Endothelial cell of umbilical vein (primary cell): ENCODE measurements at regions of chr6 and their contacts with region 1.

Region 1: DNA sequence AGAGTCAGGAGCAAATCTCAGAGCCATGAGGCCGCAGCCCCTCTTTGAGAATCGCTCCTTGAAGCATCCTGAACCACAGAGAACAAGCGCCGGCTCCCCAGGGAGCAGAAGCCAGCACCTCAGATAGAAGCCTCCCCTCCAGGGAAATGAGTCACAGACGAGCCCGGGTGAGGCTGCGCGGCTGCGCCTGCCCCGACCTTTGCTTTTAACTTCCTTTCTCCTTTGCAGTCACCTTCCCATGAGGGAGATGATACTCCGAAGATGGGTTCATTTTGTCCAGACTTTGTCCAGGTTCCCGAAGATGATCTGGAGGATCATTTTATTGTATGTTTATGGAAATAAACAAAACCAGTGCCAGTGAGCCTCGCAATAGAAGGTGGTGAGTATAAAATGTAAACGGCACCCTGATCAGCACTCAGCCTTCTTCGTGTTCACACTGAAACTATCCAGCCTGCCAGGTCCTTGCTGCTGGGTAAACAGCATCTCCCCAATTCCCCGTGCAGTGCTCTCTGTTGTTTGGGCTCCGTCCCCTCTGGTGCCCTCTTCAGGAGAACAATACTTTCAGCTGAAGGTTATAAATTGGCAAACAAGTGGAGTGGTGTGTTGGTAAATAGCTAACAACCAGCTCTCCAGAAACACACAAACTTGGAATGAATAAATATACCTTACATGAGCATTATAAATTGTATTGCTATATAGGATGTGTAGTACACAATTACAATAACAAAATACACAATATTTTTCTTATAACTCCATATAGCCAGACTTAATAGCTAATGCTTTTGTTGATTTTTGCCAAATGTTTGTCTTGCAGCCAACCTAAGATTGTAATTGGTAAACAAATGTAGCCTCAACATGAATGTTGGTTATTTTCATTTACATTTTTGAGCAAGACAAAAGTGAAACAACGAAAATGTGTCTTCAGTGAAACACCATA is 41.4 kb upstream of the TMEM181 start:
- DNase-seq: peak; percentile 71
- H3K4me3 ChIP-seq: peak overlapping the region in 2 of 3 experiments; percentile 17 to 23
- H3K27ac ChIP-seq: no peak overlapping the region
- H3K4me1 ChIP-seq: peaks cover 15% of the 10 kb centered on the region
- H3K27me3 ChIP-seq: no peaks in the 10 kb centered on the region
- CTCF ChIP-seq: peak; percentile 51 to 54
- POLR2A ChIP-seq: no peak

Region 2: DNA sequence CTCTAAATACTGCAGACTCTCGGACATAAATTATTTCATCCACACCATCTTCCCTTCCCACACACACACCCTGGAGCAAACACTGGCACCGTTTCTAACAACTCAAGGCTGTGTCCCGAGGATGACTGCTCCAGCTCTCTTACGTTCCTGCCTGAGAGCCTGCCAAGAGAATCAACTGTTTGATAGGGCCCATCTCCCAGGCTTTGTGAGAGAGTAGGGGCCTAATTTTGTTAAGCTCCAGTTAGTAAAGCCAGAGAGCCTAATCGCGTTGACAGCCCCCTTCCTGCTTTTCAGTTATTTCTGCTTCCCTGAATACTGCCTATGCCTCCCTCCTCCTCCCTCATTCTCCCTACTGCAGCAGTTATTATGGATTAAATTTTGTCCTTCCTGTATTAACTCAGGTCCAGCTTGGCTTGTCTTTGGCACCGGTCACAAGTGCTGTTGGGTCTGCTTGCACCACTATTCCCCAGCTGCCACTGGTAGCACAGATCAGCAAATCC is 76.7 kb before region 1 on chr6:
- CTCF ChIA-PET with region 1: interaction called, 6 read pairs
- POLR2A ChIA-PET with region 1: no interaction called
- dilution Hi-C with region 1: no loop called
- intact Hi-C with region 1: loop called (anchors 2 kb)
- DNase-seq: no peak
- H3K4me3 ChIP-seq: no peak overlapping the region
- H3K27ac ChIP-seq: no peak overlapping the region
- H3K4me1 ChIP-seq: no peaks in the 10 kb centered on the region
- H3K27me3 ChIP-seq: no peaks in the 10 kb centered on the region
- CTCF ChIP-seq: no peak
- POLR2A ChIP-seq: no peak

Region 3: GRCh38 chr6:158500016-158500735 is 18.3 kb before region 1 on chr6:
- CTCF ChIA-PET with region 1: interaction called, 12 read pairs
- POLR2A ChIA-PET with region 1: no interaction called
- dilution Hi-C with region 1: no loop called
- intact Hi-C with region 1: no loop called
- DNase-seq: no peak
- H3K4me3 ChIP-seq: no peak overlapping the region
- H3K27ac ChIP-seq: no peak overlapping the region
- H3K4me1 ChIP-seq: no peaks in the 10 kb centered on the region
- H3K27me3 ChIP-seq: no peaks in the 10 kb centered on the region
- CTCF ChIP-seq: no peak
- POLR2A ChIP-seq: no peak

Region 4: DNA sequence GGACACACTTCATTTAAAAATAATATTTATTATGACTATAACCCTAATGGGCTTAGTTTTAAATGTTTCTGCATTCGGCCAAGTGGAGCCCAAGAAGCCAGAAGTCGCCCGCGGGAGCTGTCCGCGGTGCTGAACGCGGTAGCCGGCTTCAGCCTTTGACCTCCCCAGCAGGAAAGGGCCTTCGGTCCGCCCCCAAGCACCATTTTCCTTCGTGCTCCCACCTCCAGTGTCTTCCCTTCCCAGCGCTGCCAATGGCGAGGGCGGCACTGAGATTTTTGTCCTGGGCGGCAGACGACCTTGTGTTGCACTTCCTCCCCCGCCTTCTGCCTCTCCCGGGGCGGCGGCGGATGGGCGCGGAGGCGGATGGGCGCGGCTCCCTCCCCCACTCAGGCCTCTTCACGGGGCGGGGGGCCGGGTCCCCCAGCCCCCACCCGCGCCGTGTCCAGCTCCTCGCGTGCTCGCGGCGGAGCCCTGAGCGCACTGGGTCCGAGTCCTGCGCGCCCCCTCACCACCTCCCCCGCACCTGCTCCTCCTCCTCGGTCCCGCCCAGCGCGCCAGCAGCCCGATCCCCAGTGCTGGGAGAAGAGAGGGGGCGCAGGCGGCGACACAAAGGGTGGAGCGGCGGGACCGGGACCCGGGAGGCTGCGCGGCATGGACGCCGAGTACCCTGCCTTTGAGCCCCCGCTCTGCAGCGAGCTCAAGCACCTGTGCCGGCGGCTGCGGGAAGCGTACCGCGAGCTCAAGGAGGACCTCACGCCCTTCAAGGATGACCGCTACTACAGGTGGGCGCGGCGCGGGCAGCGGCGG is 17.8 kb after region 1 on chr6:
- CTCF ChIA-PET with region 1: interaction called, 4 read pairs
- POLR2A ChIA-PET with region 1: no interaction called
- dilution Hi-C with region 1: no loop called
- intact Hi-C with region 1: loop called (anchors 2 kb)
- DNase-seq: peak; percentile 64
- H3K4me3 ChIP-seq: peak overlapping the region; percentile 32 to 42 (median 39)
- H3K27ac ChIP-seq: no peak overlapping the region
- H3K4me1 ChIP-seq: peaks cover 7% of the 10 kb centered on the region
- H3K27me3 ChIP-seq: peaks cover 22 to 45% of the 10 kb centered on the region in 2 experiments
- CTCF ChIP-seq: no peak
- POLR2A ChIP-seq: no peak

Region 5: DNA sequence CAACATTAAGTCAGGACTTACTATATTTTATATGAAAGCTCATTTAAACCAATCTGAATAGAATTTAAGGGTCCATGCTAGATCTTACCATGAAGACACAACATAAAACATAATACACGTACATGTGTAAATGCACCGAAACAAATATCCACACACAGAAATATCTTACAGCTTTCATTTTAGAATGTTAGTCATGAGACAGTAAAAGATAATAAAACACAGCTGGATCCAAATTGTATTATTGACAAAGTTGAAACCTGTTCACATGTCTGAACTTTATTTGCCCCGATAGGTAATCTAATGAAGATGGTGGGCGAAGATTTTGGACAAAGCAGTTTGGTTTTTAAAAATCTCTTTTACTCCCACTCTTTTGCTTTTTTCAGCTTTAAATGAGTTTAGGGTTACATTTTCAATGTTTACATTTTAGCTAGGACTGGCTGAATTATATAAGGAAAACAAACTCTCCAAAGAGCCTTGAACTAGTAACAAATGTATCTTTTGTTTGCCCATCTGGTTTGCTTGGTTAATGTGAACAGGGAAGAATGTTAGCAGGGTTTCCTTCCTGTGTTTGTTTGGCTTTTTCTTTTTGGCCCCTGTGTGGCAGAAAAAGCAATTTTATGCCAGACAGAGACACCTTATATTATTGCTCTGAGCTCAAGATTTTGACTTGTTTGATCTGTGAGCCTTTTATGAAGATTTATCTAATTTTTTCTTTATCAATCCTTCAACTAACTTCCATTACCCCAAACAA is 36.3 kb after region 1 on chr6:
- CTCF ChIA-PET with region 1: interaction called, 13 read pairs
- POLR2A ChIA-PET with region 1: no interaction called
- dilution Hi-C with region 1: no loop called
- intact Hi-C with region 1: loop called (anchors 1 kb)
- DNase-seq: peak; percentile 81
- H3K4me3 ChIP-seq: peak overlapping the region in 1 of 3 experiments; percentile 11
- H3K27ac ChIP-seq: peak overlapping the region; percentile 81
- H3K4me1 ChIP-seq: peaks cover 35% of the 10 kb centered on the region
- H3K27me3 ChIP-seq: no peaks in the 10 kb centered on the region
- CTCF ChIP-seq: no peak
- POLR2A ChIP-seq: no peak

Region 6: DNA sequence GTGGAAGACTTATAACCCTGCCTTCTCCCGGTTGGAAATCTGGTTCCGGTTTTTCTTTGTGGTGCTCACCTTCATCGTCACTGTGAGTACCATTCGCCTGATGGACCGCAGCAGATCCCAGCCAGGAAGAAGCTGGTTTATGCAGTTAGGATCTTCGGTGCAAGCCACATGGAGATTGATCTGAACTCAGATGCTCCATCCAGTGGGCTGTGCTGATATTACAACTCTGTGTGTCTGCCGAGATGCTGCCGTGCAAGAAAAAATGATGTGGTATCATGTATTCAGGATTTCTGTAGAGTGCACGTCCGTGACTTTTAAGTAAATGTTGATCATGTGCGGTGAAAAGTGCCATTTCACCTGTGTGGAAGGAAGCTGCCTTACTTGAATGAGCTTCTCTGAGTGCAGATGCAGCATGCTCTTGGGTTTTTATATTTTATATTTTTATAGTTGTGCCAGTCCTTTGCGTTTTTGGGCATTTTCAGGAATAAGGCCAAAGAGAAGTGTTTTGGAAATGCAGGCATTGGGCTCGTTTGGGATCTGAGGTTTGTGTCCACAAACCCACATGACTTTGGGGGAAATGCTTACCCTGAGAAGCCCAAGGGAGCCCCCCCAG is 86.9 kb after region 1 on chr6:
- CTCF ChIA-PET with region 1: interaction called, 9 read pairs
- POLR2A ChIA-PET with region 1: no interaction called
- dilution Hi-C with region 1: no loop called
- intact Hi-C with region 1: loop called (anchors 1 kb)
- DNase-seq: peak; percentile 85
- H3K4me3 ChIP-seq: no peak overlapping the region
- H3K27ac ChIP-seq: no peak overlapping the region
- H3K4me1 ChIP-seq: no peaks in the 10 kb centered on the region
- H3K27me3 ChIP-seq: no peaks in the 10 kb centered on the region
- CTCF ChIP-seq: peak; percentile 68 to 72
- POLR2A ChIP-seq: no peak

Region 7: GRCh38 chr6:158660333-158660754 is 141.9 kb after region 1 on chr6:
- CTCF ChIA-PET with region 1: no interaction called
- POLR2A ChIA-PET with region 1: no interaction called
- dilution Hi-C with region 1: no loop called
- intact Hi-C with region 1: no loop called
- DNase-seq: no peak
- H3K4me3 ChIP-seq: no peak overlapping the region
- H3K27ac ChIP-seq: no peak overlapping the region
- H3K4me1 ChIP-seq: no peaks in the 10 kb centered on the region
- H3K27me3 ChIP-seq: peaks cover 11 to 14% of the 10 kb centered on the region in 2 experiments
- CTCF ChIP-seq: peak; percentile 44 to 64
- POLR2A ChIP-seq: no peak

Region 8: DNA sequence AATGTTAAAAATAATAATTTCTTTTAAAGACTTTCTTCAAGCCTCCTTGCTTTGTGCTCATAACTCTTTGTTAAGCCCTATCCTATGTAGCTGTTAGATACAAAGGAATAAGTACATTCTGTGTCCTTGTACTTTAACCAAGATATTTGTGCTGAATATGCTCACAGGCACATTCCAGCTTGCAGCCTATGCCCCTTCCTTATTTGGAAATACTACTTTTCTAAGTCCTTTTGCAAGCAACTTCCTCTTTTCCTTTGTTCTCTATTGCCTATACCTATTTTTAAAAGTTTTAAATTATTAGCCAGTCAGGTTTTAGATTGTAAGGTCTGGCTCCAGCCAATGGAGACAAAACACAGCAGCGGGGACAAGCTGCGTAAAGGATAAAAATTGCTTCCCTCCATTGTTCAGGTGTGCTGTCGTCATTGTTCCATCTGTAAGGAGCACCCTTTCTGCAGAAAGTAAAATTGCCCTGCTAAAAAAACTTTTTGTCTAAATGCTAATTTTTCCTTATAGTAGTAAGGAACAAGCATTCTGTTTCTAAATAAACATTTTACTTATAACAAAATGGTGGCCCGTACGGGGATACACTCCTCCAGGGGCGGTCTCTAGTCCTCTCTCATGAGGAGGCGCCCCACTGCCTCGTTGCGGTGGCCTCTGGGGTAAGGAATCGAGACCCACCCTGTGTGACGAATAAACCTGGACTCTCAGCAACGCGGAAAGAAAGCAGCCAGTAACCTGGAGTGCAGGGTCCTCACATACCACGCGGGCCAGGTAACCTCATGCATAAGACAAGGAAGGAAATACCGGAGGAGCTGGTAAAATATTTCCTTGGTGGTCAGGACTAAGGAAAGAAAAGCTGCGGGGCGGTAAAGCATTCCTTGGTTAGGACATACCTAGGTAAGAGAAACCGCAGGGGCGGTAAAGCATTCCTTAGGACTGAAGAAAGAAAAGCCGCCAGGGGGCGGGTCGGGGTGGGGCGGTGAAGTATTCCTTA is 211.8 kb after region 1 on chr6:
- CTCF ChIA-PET with region 1: no interaction called
- POLR2A ChIA-PET with region 1: no interaction called
- dilution Hi-C with region 1: no loop called
- intact Hi-C with region 1: no loop called
- DNase-seq: no peak
- H3K4me3 ChIP-seq: no peak overlapping the region
- H3K27ac ChIP-seq: no peak overlapping the region
- H3K4me1 ChIP-seq: no peaks in the 10 kb centered on the region
- H3K27me3 ChIP-seq: no peaks in the 10 kb centered on the region
- CTCF ChIP-seq: no peak
- POLR2A ChIP-seq: no peak